HEK293 (cell line): ENCODE measurements at regions of chr17 and their contacts with region 1.

Region 1: DNA sequence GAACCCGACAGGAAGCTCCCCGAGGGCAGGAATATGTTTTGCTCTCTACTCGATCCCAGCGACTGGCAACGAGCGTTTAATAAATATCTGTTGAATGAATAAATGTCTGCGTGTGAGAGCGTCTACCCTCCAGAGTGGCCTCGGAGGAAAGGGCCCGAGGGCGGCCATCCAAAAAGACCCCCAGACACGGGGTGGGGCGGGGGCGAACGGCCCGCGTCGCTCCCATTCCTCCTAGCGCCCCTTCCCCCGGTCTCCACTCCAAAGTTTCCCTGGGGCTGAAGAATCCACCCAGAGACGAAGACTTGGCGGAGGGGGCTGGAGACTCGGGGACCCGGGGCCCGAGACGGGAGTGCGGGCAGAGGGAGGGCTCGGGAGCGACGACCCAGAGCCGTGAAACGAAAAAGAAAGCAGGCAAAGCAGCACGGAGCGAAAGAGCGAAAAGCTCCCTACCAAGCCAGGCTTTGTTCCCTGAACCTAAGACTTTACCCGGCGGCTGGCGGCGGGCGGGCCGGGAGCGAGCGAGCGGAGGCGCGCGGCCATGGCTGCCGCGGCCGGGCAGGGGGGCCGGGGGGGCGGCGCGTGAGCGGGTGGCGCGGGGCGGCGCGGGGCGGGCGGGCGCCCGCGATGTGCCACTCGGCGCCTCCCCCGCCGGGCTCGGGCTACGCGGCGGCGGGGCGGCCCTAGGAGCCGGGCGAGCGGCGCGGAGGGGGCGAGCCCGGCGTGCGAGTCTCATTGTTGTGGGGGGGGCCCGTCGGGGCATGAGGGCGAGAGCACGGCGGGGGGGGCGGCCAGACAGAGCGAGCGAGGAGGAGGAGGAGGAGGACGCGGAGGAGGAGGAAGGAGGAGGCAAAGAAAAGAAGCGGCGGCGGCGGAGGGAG is at the start of gene MLLT6:
- H3K4me3 ChIP-seq: peak within 1 kb of the TSS; percentile 60
- H3K27ac ChIP-seq: peak within 1 kb of the TSS; percentile 87
- H3K4me1 ChIP-seq: peaks cover 10% of the 10 kb centered on the region
- CTCF ChIP-seq: no peak

Region 2: DNA sequence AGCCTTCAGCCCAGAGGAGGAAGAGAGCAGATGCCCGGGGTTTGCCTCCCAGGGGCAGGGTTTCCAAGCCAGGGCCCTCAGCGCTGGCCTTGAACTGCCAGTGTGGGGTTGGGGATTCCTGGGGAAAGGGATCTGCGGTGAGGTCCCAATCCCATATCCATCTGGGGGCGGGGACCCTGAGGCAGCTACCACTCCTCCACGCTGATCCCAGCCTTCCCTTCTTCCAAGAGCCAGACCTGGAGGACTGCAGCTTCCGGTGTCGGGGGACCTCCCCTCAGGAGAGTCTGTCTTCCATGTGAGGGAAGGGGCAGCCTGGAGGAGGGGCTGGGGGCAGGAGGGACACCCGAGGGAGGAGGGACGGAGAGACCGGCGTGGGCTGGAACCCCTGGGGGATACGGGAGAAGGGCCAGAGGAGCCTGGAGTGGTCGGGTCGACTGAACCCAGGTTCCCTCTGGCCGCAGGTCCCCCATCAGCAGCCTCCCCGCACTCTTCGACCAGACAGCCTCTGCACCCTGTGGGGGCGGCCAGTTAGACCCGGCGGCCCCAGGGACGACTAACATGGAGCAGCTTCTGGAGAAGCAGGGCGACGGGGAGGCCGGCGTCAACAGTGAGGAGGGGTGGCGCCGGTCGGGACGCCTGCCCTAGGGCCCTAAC is 14.5 kb after region 1 on chr17:
- CTCF ChIA-PET with region 1: interaction called, 3 read pairs
- POLR2A ChIA-PET with region 1: interaction called, 18 read pairs
- H3K4me3 ChIP-seq: no peak overlapping the region
- H3K27ac ChIP-seq: no peak overlapping the region
- H3K4me1 ChIP-seq: no peaks in the 10 kb centered on the region
- CTCF ChIP-seq: no peak

Region 3: GRCh38 chr17:38729886-38730525 is 25.1 kb after region 1 on chr17 and contains the start of gene CISD3:
- CTCF ChIA-PET with region 1: interaction called, 7 read pairs
- POLR2A ChIA-PET with region 1: interaction called, 18 read pairs
- H3K4me3 ChIP-seq: peak within 1 kb of the TSS; percentile 67
- H3K27ac ChIP-seq: peak within 1 kb of the TSS; percentile 67
- H3K4me1 ChIP-seq: peaks cover 5% of the 10 kb centered on the region
- CTCF ChIP-seq: 0 out of 2 replicates have a peak, but pooled peaks have one; percentile 24

Region 4: DNA sequence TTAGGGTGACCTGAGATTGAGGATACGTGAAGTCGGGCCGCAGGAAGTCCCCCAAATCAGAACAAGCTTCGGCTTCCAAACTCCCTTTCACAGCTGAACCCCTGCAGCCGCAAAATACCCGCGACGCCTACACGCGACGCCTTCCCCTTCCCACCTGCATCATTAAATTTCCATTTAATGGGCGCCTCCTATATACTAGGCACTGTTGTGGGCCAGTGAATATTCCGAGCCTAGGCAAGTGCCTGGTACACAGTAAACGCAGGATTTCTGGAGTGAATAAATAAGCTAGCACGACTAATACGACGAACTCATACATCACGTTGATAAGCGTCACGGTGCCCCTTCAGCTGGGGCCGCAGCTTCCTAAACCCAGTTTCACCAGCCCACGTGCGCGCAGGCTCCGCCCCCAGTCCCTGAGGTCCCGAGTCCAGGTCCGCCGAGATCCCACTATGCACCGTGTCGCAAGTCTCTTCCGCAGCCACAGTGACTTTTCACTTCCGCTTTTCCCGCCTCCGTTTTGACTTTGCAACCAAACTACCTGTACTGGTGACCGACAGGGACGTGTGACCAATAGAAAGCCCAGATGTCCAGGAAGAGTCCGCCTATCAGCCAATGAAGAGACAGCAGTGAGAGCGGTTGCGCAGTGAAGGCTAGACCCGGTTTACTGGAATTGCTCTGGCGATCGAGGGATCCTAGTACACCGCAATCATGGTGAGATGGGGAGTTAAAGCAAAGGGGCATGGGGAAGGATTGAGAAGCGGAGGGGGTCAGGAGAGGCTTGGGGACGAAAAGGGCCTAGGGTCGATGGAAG is 47.4 kb after region 1 on chr17 and contains the start of gene PSMB3:
- CTCF ChIA-PET with region 1: interaction called, 6 read pairs
- POLR2A ChIA-PET with region 1: interaction called, 20 read pairs
- H3K4me3 ChIP-seq: peak within 1 kb of the TSS; percentile 78
- H3K27ac ChIP-seq: peak within 1 kb of the TSS; percentile 66
- H3K4me1 ChIP-seq: peaks cover 11% of the 10 kb centered on the region
- CTCF ChIP-seq: no peak; the same call in 1 of the 2 replicates

Region 5: DNA sequence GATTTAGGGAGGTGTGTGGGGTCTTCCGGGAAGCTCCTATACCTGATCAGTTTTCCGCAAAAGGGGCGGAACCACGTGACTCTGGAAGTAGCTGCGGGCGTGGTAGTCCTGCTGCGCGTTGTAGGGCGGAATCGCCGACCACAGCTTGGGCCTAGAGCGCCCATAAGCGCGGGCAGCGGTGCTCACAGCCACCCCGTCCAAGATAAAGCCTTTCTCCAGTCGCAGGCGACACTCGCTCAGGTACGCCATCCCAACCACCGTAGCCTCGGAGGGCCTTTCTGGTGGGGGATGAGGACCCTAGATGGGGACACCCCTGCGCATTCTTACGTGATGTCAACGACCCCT is 136.2 kb after region 1 on chr17:
- CTCF ChIA-PET with region 1: no interaction called
- POLR2A ChIA-PET with region 1: interaction called, 10 read pairs
- H3K4me3 ChIP-seq: no peak overlapping the region
- H3K27ac ChIP-seq: no peak overlapping the region
- H3K4me1 ChIP-seq: no peaks in the 10 kb centered on the region
- CTCF ChIP-seq: no peak